ENCODE measurements at regions of chr15 and their contacts with region 1.

Region 1: GRCh38 chr15:79853458-79854328 is 43.1 kb downstream of the MTHFS start:
- DNase-seq: peak; percentile 84
- ATAC-seq: peak; percentile 98
- H3K4me3 Mint-ChIP-seq: no peak overlapping the region
- H3K27ac Mint-ChIP-seq: no peak overlapping the region
- H3K4me1 Mint-ChIP-seq: peaks cover 17% of the 10 kb centered on the region
- H3K27me3 Mint-ChIP-seq: no peaks in the 10 kb centered on the region

Region 2: DNA sequence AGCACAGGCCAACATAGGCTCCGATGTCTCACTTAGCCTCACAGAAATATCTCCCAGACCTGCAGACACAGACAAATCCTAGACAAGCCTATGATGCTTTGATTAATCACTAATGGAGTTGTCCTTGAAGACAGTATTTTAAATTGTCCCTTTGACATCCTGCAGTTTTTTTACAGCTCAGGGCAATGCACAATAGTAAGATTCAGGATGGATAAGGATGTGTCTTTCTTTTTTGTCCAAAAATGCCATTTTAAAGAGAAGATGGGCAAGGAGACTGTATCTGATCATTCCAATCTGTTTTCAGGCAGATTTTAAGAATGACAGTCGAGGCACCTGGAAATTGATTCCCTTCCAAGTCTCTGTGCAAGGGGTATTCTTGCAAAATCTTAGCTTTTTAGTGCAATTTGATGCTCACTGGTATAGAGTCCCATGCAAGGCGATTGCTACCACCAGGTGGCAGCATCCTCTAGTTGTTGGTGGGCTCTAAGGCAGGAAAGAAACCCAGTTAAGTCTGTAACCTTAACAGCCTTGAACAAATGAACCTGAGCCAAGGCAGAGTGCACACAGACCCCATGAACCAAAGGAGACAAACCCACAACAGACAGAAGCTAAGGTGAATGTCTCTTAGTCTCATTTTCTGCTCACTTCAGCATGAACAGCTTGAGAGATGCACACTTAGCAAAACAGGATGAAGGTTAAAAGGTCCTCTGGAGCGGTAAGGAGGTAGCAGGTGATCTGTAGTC is 472.8 kb before region 1 on chr15:
- CTCF ChIA-PET with region 1: interaction called, 48 read pairs
- POLR2A ChIA-PET with region 1: no interaction called
- intact Hi-C with region 1: loop called (anchors 1 kb)
- DNase-seq: peak; percentile 89
- ATAC-seq: peak; percentile 95
- H3K4me3 Mint-ChIP-seq: no peak overlapping the region
- H3K27ac Mint-ChIP-seq: no peak overlapping the region
- H3K4me1 Mint-ChIP-seq: peaks cover 3% of the 10 kb centered on the region
- H3K27me3 Mint-ChIP-seq: no peaks in the 10 kb centered on the region

Region 3: GRCh38 chr15:79769069-79769481 is 84.6 kb before region 1 on chr15:
- CTCF ChIA-PET with region 1: interaction called, 6 read pairs
- POLR2A ChIA-PET with region 1: no interaction called
- intact Hi-C with region 1: loop called in 1 of 2 experiments (anchors 5 kb)
- DNase-seq: peak; percentile 25
- ATAC-seq: no peak
- H3K4me3 Mint-ChIP-seq: no peak overlapping the region
- H3K27ac Mint-ChIP-seq: no peak overlapping the region
- H3K4me1 Mint-ChIP-seq: no peaks in the 10 kb centered on the region
- H3K27me3 Mint-ChIP-seq: no peaks in the 10 kb centered on the region

Region 4: GRCh38 chr15:79872358-79873017 is 18.8 kb after region 1 on chr15:
- CTCF ChIA-PET with region 1: interaction called, 20 read pairs
- POLR2A ChIA-PET with region 1: no interaction called
- intact Hi-C with region 1: no loop called
- DNase-seq: peak; percentile 43
- ATAC-seq: peak; percentile 69
- H3K4me3 Mint-ChIP-seq: no peak overlapping the region
- H3K27ac Mint-ChIP-seq: no peak overlapping the region
- H3K4me1 Mint-ChIP-seq: peaks cover 23% of the 10 kb centered on the region
- H3K27me3 Mint-ChIP-seq: no peaks in the 10 kb centered on the region

Region 5: GRCh38 chr15:79896637-79897379 is 43.1 kb after region 1 on chr15 and contains the start of gene MTHFS:
- CTCF ChIA-PET with region 1: interaction called, 15 read pairs
- POLR2A ChIA-PET with region 1: no interaction called
- intact Hi-C with region 1: no loop called
- DNase-seq: peak; percentile 87
- ATAC-seq: peak; percentile 81
- H3K4me3 Mint-ChIP-seq: peak within 1 kb of the TSS; percentile 97
- H3K27ac Mint-ChIP-seq: peak within 1 kb of the TSS; percentile 100
- H3K4me1 Mint-ChIP-seq: peaks cover 46% of the 10 kb centered on the region
- H3K27me3 Mint-ChIP-seq: no peaks in the 10 kb centered on the region
- total RNA-seq, gene MTHFS: 36.1 to 48.5 TPM

Region 6: GRCh38 chr15:80173022-80173759 is 319.5 kb after region 1 on chr15:
- CTCF ChIA-PET with region 1: interaction called, 4 read pairs
- POLR2A ChIA-PET with region 1: no interaction called
- intact Hi-C with region 1: loop called in 1 of 2 experiments (anchors 5 kb)
- DNase-seq: peak; percentile 85
- ATAC-seq: peak; percentile 88
- H3K4me3 Mint-ChIP-seq: no peak overlapping the region
- H3K27ac Mint-ChIP-seq: no peak overlapping the region
- H3K4me1 Mint-ChIP-seq: no peaks in the 10 kb centered on the region
- H3K27me3 Mint-ChIP-seq: no peaks in the 10 kb centered on the region